ENCODE measurements at regions of chr11 and their contacts with region 1.

Region 1: GRCh38 chr11:114340311-114341131 is 44.3 kb downstream of the NNMT start:
- DNase-seq: no peak
- H3K4me3 ChIP-seq: peak overlapping the region; percentile 18 to 49 (median 20)
- H3K27ac ChIP-seq: peak overlapping the region; percentile 11 to 13
- H3K4me1 ChIP-seq: peaks cover 0 to 5% of the 10 kb centered on the region in 2 donors
- H3K27me3 ChIP-seq: no peaks in the 10 kb centered on the region
- CTCF ChIP-seq: peak; percentile 58 to 87 (median 82)
- POLR2A ChIP-seq: no peak

Region 2: DNA sequence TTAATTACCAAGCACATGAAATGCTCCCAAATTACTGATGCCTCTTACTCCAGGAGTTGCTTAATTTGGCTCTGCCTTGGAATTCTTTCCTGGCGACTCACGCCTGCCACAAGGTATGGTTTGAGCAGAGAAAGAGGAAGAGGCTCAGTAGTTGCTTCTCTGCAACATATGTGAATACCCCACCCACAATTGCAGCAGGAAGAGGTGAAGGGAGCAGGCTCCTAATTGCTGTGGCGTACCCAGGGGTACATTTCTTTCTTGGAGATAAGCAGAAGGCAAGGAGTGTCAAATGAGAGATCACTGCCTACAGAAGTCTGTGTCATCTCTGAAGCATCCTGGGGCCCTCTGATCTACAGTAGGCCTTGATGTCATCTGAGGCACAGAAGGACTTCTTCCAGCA is 54.9 kb before region 1 on chr11:
- intact Hi-C with region 1: no loop called
- DNase-seq: no peak
- H3K4me3 ChIP-seq: no peak overlapping the region
- H3K27ac ChIP-seq: peak overlapping the region in 1 of 2 donors; percentile 8
- H3K4me1 ChIP-seq: peaks cover 0 to 9% of the 10 kb centered on the region in 2 donors
- H3K27me3 ChIP-seq: no peaks in the 10 kb centered on the region
- CTCF ChIP-seq: no peak
- POLR2A ChIP-seq: no peak

Region 3: DNA sequence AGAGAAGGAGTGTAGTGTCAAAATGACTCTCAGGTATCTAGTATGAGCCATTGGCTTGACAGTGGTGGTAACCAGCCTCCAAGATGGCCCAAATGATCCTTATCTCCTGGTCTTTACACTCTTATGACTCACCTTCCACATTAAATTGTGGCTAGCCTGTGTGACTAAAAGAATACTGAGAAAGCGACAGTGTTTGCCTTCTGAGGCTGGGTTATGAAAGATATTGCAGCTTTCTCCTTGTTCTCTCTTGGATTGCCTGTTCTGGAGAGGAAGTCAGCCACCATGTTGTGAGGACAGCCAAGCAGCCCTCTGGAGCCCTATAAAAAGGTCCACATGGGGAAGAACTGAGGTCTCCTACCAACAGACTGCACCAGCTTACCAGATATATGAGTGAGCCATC is 44.0 kb after region 1 on chr11:
- intact Hi-C with region 1: no loop called
- DNase-seq: no peak
- H3K4me3 ChIP-seq: no peak overlapping the region
- H3K27ac ChIP-seq: no peak overlapping the region
- H3K4me1 ChIP-seq: no peaks in the 10 kb centered on the region
- H3K27me3 ChIP-seq: no peaks in the 10 kb centered on the region
- CTCF ChIP-seq: no peak
- POLR2A ChIP-seq: no peak

Region 4: DNA sequence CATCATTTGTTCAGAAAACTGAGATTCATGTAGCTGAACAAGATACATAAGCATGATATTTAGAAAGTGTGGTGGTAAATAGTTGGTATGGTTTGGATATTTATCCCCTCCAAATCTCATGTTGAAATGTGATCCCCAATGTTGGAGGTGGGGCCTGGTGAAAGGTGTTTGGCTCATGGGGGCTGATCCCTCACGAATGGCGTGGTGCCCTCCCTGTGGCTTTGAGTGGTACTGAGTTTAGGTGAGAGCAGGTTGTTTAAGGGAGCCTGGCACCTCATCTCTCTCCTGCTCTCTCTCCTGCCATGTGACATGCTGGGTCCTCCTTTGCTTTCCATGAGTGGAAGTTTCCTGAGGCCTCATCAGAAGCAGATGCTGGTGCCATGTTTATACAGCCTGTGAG is 171.0 kb after region 1 on chr11:
- intact Hi-C with region 1: no loop called
- DNase-seq: no peak
- H3K4me3 ChIP-seq: no peak overlapping the region
- H3K27ac ChIP-seq: no peak overlapping the region
- H3K4me1 ChIP-seq: no peaks in the 10 kb centered on the region
- H3K27me3 ChIP-seq: no peaks in the 10 kb centered on the region
- CTCF ChIP-seq: no peak
- POLR2A ChIP-seq: no peak

Region 5: DNA sequence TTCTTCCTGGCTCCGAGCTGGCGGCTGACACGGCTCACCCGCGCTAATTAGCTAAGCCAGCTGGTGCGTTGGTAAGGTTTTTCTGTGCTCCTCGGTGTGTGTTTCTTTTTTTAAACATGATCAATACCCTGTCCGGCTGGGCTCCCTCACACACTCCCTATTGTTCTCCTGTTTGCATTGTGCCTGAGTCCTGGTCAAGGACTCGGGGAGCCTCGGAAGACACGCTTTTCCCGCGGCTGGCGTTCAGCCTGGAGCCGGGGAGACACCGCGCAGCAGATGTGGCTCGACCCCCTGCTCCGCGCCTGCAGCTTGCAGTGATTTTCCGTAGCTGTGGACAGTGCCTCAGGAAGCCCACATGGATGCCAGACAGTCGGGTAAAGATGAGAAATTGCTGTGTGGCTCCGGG is 1618.6 kb after region 1 on chr11:
- intact Hi-C with region 1: loop called (anchors 10 kb)
- DNase-seq: no peak
- H3K4me3 ChIP-seq: no peak overlapping the region
- H3K27ac ChIP-seq: no peak overlapping the region
- H3K4me1 ChIP-seq: no peaks in the 10 kb centered on the region
- H3K27me3 ChIP-seq: no peaks in the 10 kb centered on the region
- CTCF ChIP-seq: no peak
- POLR2A ChIP-seq: no peak